CD14-positive monocyte (primary cell): ENCODE measurements at regions of chr3 and their contacts with region 1.

Region 1: GRCh38 chr3:108221911-108222852 is at the start of gene IFT57:
- DNase-seq: peak; percentile 96
- H3K4me3 ChIP-seq: peak within 1 kb of the TSS; percentile 77 to 90 (median 84)
- H3K4me3 Mint-ChIP-seq: peak within 1 kb of the TSS; percentile 99 to 100
- H3K27ac ChIP-seq: peak within 1 kb of the TSS; percentile 63 to 82
- H3K27ac Mint-ChIP-seq: peak within 1 kb of the TSS; percentile 96 to 100 (median 99)
- H3K4me1 ChIP-seq: peaks cover 33 to 35% of the 10 kb centered on the region in 2 donors
- H3K4me1 Mint-ChIP-seq: peaks cover 46% of the 10 kb centered on the region
- H3K27me3 ChIP-seq: no peaks in the 10 kb centered on the region
- H3K27me3 Mint-ChIP-seq: peaks cover 0 to 3% (median 0%) of the 10 kb centered on the region in 3 donors
- CTCF ChIP-seq: no peak
- polyA plus RNA-seq, gene IFT57: 4.9 to 22.9 (median 15.1) TPM

Region 2: GRCh38 chr3:108090701-108091451 is 131.3 kb before region 1 on chr3 and contains the start of gene CD47:
- intact Hi-C with region 1: loop called (anchors 10 kb)
- DNase-seq: peak; percentile 92 to 94 (median 93)
- H3K4me3 ChIP-seq: peak within 1 kb of the TSS; percentile 82 to 94 (median 90)
- H3K4me3 Mint-ChIP-seq: peak within 1 kb of the TSS; percentile 97 to 100
- H3K27ac ChIP-seq: peak within 1 kb of the TSS; percentile 86 to 96
- H3K27ac Mint-ChIP-seq: peak within 1 kb of the TSS; percentile 93 to 99 (median 97)
- H3K4me1 ChIP-seq: peaks cover 21 to 38% of the 10 kb centered on the region in 2 donors
- H3K4me1 Mint-ChIP-seq: peaks cover 16% of the 10 kb centered on the region
- H3K27me3 ChIP-seq: no peaks in the 10 kb centered on the region
- H3K27me3 Mint-ChIP-seq: peaks cover 2 to 6% (median 3%) of the 10 kb centered on the region in 3 donors
- CTCF ChIP-seq: no peak
- polyA plus RNA-seq, gene CD47: 52.3 to 203 (median 173) TPM

Region 3: GRCh38 chr3:108124337-108125152 is 97.6 kb before region 1 on chr3:
- intact Hi-C with region 1: loop called in 1 of 2 experiments (anchors 5 kb)
- DNase-seq: peak; percentile 80 to 95 (median 86)
- H3K4me3 ChIP-seq: peak overlapping the region; percentile 14 to 42 (median 38)
- H3K4me3 Mint-ChIP-seq: peak overlapping the region; percentile 66 to 87
- H3K27ac ChIP-seq: peak overlapping the region; percentile 96 to 97
- H3K27ac Mint-ChIP-seq: peak overlapping the region; percentile 97 to 100 (median 99)
- H3K4me1 ChIP-seq: peaks cover 30 to 31% of the 10 kb centered on the region in 2 donors
- H3K4me1 Mint-ChIP-seq: peaks cover 47% of the 10 kb centered on the region
- H3K27me3 ChIP-seq: no peaks in the 10 kb centered on the region
- H3K27me3 Mint-ChIP-seq: peaks cover 0 to 9% (median 0%) of the 10 kb centered on the region in 3 donors
- CTCF ChIP-seq: no peak

Region 4: GRCh38 chr3:108589146-108589997 is 367.2 kb after region 1 on chr3 and contains the starts of genes CIP2A and DZIP3:
- intact Hi-C with region 1: loop called in 1 of 2 experiments (anchors 10 kb)
- DNase-seq: peak; percentile 81 to 90 (median 82)
- H3K4me3 ChIP-seq: peak within 1 kb of the TSS; percentile 68 to 96 (median 92)
- H3K4me3 Mint-ChIP-seq: peak within 1 kb of the TSS; percentile 96 to 99
- H3K27ac ChIP-seq: peak within 1 kb of the TSS; percentile 91 to 97
- H3K27ac Mint-ChIP-seq: peak within 1 kb of the TSS; percentile 97 to 100 (median 99)
- H3K4me1 ChIP-seq: peaks cover 20 to 27% of the 10 kb centered on the region in 2 donors
- H3K4me1 Mint-ChIP-seq: peaks cover 30% of the 10 kb centered on the region
- H3K27me3 ChIP-seq: no peaks in the 10 kb centered on the region
- H3K27me3 Mint-ChIP-seq: peaks cover 0 to 1% (median 0%) of the 10 kb centered on the region in 3 donors
- CTCF ChIP-seq: no peak
- polyA plus RNA-seq, gene CIP2A: 0.57 to 5.0 (median 1.3) TPM
- polyA plus RNA-seq, gene DZIP3: 0.92 to 1.2 (median 1.1) TPM